Vagina (tissue), 2 donors: ENCODE measurements at regions of chr7 and their contacts with region 1.

Region 1: DNA sequence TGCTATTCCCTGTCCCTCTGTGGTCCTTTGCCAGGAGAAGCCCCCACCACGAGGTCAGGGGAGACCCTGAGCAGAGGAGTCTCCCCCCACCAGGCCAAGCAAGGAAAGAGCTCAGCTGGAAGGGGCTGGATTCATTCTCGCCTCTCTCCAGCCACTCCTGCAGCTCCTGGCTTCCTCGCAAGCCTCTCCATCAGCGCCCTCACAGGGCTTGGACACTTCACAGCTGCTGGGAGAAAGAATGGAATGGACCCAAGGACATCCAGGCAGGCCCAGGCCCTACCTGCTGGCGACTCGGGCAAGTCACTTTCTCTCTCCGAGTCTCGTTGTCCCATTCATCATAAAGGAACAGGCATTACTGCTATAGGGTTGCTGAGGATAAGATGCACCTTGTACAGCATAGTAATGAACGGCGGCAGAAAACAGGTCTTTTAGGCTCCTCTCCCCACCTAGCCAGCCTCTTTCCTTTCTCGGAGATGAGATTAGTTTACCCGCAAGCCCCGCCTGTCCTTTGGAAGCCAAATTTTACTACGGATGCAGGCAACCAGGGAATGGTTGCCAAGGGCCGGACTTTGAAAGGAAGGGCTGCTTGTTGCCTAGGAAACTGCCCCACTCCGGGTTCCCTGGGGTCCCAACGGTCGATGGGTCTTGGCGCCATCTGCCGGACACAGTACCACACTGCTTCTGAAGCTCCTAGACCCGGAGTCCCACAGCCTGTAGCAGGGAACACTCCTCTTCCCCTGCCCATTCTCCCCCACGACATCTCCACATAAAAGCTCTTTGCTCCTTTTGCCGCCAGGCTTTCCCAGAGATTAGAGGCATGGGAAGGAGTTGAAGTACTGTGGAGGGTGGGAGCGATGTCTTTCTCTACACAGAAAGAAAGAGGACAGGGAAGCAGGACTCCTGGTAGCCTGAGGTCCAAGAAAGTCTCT is 22.3 kb downstream of the IMPDH1 start:
- DNase-seq: no peak
- H3K4me3 ChIP-seq: no peak overlapping the region
- H3K27ac ChIP-seq: no peak overlapping the region
- H3K4me1 ChIP-seq: peaks cover 5% of the 10 kb centered on the region
- H3K27me3 ChIP-seq: no peaks in the 10 kb centered on the region
- CTCF ChIP-seq: peak; percentile 63 to 75 (median 72)
- POLR2A ChIP-seq: no peak

Region 2: GRCh38 chr7:128197589-128197988 is 189.9 kb before region 1 on chr7:
- intact Hi-C with region 1: no loop called
- DNase-seq: no peak
- H3K4me3 ChIP-seq: no peak overlapping the region
- H3K27ac ChIP-seq: no peak overlapping the region
- H3K4me1 ChIP-seq: peaks cover 11% of the 10 kb centered on the region
- H3K27me3 ChIP-seq: no peaks in the 10 kb centered on the region
- CTCF ChIP-seq: no peak
- POLR2A ChIP-seq: no peak

Region 3: GRCh38 chr7:128347647-128348097 is 39.8 kb before region 1 on chr7:
- intact Hi-C with region 1: loop called (anchors 5 kb)
- DNase-seq: no peak
- H3K4me3 ChIP-seq: no peak overlapping the region
- H3K27ac ChIP-seq: no peak overlapping the region
- H3K4me1 ChIP-seq: peaks cover 22% of the 10 kb centered on the region
- H3K27me3 ChIP-seq: no peaks in the 10 kb centered on the region
- CTCF ChIP-seq: peak in 2 of 3 experiments; percentile 41 to 46
- POLR2A ChIP-seq: no peak